ENCODE measurements at regions of chr20 and their contacts with region 1.

Region 1: GRCh38 chr20:32091888-32092346 is 17.6 kb upstream of the TM9SF4 start:
- DNase-seq: peak; percentile 81 to 83
- H3K4me3 ChIP-seq: no peak overlapping the region
- H3K27ac ChIP-seq: no peak overlapping the region
- H3K4me1 ChIP-seq: no peaks in the 10 kb centered on the region
- H3K27me3 ChIP-seq: peaks cover 0 to 4% of the 10 kb centered on the region in 2 donors
- CTCF ChIP-seq: peak; percentile 57 to 88

Region 2: GRCh38 chr20:31859998-31860709 is 231.8 kb before region 1 on chr20:
- intact Hi-C with region 1: loop called (anchors 10 kb)
- DNase-seq: no peak
- H3K4me3 ChIP-seq: no peak overlapping the region
- H3K27ac ChIP-seq: no peak overlapping the region
- H3K4me1 ChIP-seq: peaks cover 5 to 22% (median 16%) of the 10 kb centered on the region in 4 donors
- H3K27me3 ChIP-seq: peaks cover 0 to 58% of the 10 kb centered on the region in 2 donors
- CTCF ChIP-seq: no peak

Measured in tibial artery (tissue), 4 donors.